ENCODE measurements at regions of chr1 and their contacts with region 1.

Region 1: DNA sequence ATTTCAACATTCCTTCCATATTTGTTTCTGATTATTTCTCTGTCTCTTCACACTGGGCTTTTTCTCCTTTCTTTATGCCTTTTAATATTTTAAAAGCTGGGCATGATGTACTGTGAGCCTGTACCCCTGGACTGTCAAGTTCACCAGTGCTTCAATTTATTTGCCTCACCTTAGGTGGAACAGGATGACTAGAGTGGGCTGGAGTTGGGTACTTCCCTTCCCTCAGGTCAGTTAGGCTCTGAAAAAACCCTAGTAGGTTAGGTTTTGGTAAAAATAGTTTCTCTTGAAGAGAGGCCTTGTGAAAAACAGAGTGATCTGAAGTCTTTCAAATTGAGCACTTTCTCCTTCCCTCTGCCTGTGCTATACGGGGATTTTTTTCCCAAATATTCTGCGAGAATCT is 163.0 kb upstream of the LYPLAL1 start:
- DNase-seq: no peak
- H3K4me3 ChIP-seq: no peak overlapping the region
- H3K27ac ChIP-seq: no peak overlapping the region
- H3K4me1 ChIP-seq: no peaks in the 10 kb centered on the region
- H3K27me3 ChIP-seq: no peaks in the 10 kb centered on the region
- CTCF ChIP-seq: no peak
- POLR2A ChIP-seq: no peak

Region 2: DNA sequence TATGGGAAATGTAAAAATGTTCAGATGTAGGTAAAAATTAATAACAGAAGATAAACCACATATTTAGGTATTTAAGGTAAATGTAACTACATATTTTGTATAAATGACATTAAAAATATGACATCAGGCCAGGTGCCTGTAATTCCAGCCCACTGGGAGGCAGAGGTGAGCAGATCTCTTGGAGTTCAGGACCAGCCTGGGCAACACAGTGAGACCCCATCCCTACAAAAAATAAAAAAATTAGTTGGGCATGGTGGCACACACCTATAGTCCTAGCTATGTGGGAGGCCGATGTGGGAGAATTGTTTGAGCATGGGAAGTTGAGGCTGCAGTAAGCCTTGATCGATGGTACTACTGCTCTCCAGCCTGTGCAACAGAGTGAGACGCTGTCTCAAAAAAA is 1163.1 kb before region 1 on chr1:
- intact Hi-C with region 1: no loop called
- DNase-seq: no peak
- H3K4me3 ChIP-seq: no peak overlapping the region
- H3K27ac ChIP-seq: no peak overlapping the region
- H3K4me1 ChIP-seq: no peaks in the 10 kb centered on the region
- H3K27me3 ChIP-seq: no peaks in the 10 kb centered on the region
- CTCF ChIP-seq: no peak
- POLR2A ChIP-seq: no peak

Region 3: DNA sequence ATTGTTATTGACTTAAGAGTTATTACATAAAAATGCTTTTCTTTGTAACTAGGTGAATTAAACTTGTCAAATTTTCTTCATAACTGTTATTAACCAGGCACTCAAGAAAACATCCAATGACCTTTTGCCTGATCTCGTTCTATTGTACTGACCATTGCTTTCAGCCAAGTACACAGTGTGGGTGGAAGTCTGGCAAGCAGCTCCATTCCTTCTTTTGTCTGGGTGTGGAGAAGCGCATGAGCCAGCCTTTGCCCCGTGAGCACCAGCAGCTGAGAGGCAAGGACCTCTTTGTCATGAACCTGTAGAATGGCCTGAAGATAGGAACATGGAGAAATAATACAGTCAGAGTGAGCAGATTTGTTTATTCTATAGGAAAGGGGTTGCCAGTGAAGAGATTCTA is 1140.7 kb after region 1 on chr1:
- intact Hi-C with region 1: loop called (anchors 10 kb)
- DNase-seq: no peak
- H3K4me3 ChIP-seq: no peak overlapping the region
- H3K27ac ChIP-seq: peak overlapping the region; percentile 15 to 37
- H3K4me1 ChIP-seq: no peaks in the 10 kb centered on the region
- H3K27me3 ChIP-seq: no peaks in the 10 kb centered on the region
- CTCF ChIP-seq: no peak
- POLR2A ChIP-seq: no peak

Measured in breast epithelium (tissue), 4 donors.